ENCODE measurements at regions of chr16 and their contacts with region 1.

Region 1: DNA sequence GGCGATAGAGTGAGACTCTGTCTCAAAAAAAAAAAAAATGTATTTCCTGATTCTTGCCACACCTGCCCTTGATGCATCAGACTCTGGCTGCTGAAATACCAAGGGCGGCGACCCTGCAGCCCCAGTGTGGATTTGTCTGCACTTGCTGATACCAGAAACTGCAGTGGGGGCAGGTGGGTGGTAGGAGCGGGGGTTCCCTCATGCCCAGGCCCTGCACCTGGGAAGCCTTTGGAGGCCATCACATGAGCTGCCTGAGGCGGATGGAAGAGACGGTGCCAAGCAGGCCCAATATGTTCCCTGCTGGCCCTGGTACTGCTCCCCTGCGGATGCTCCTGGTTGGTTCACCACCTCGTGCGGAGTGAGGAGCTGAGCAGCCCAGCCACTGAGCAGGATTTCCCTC is 50.6 kb downstream of the MARF1 start:
- DNase-seq: peak; percentile 46
- H3K4me3 Mint-ChIP-seq: no peak overlapping the region
- H3K27ac Mint-ChIP-seq: no peak overlapping the region
- H3K4me1 Mint-ChIP-seq: peaks cover 50% of the 10 kb centered on the region
- H3K27me3 Mint-ChIP-seq: no peaks in the 10 kb centered on the region

Region 2: GRCh38 chr16:15477802-15478201 is 114.5 kb before region 1 on chr16:
- CTCF ChIA-PET with region 1: no interaction called
- intact Hi-C with region 1: loop called (anchors 5 kb)
- DNase-seq: no peak
- H3K4me3 Mint-ChIP-seq: no peak overlapping the region
- H3K27ac Mint-ChIP-seq: peak overlapping the region; percentile 60
- H3K4me1 Mint-ChIP-seq: peaks cover 26% of the 10 kb centered on the region
- H3K27me3 Mint-ChIP-seq: no peaks in the 10 kb centered on the region

Region 3: GRCh38 chr16:15553313-15554088 is 38.8 kb before region 1 on chr16:
- CTCF ChIA-PET with region 1: no interaction called
- intact Hi-C with region 1: loop called (anchors 1 kb)
- DNase-seq: peak; percentile 65
- H3K4me3 Mint-ChIP-seq: no peak overlapping the region
- H3K27ac Mint-ChIP-seq: peak overlapping the region; percentile 7
- H3K4me1 Mint-ChIP-seq: peaks cover 26% of the 10 kb centered on the region
- H3K27me3 Mint-ChIP-seq: no peaks in the 10 kb centered on the region

Region 4: GRCh38 chr16:15581127-15581815 is 11.1 kb before region 1 on chr16:
- CTCF ChIA-PET with region 1: no interaction called
- intact Hi-C with region 1: no loop called
- DNase-seq: no peak
- H3K4me3 Mint-ChIP-seq: no peak overlapping the region
- H3K27ac Mint-ChIP-seq: no peak overlapping the region
- H3K4me1 Mint-ChIP-seq: peaks cover 5% of the 10 kb centered on the region
- H3K27me3 Mint-ChIP-seq: no peaks in the 10 kb centered on the region

Region 5: DNA sequence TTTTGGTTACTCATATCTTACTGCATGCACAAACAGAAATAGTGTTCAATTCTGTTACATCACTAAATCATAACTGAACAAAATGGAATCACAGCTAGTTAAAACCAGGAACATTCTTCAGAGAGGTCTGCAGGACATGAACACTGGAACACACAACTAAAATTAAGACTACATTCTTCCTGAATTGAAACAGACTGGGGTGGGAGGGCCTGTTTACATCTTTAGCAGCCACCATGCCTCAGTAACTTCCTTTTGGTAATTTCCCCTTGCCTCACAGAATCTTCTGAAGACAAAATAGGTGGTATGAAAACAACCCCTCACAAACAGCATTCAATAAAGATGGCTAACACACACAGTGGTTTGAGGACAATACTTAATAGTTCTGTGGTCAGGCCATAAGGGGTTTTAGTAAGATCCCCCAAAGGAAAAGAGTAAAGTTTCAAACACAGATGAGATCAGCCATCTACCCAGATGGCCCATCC is 44.1 kb after region 1 on chr16:
- CTCF ChIA-PET with region 1: interaction called, 6 read pairs
- intact Hi-C with region 1: loop called (anchors 1 kb)
- DNase-seq: peak; percentile 27
- H3K4me3 Mint-ChIP-seq: no peak overlapping the region
- H3K27ac Mint-ChIP-seq: peak overlapping the region; percentile 88
- H3K4me1 Mint-ChIP-seq: peaks cover 77% of the 10 kb centered on the region
- H3K27me3 Mint-ChIP-seq: no peaks in the 10 kb centered on the region

Region 6: DNA sequence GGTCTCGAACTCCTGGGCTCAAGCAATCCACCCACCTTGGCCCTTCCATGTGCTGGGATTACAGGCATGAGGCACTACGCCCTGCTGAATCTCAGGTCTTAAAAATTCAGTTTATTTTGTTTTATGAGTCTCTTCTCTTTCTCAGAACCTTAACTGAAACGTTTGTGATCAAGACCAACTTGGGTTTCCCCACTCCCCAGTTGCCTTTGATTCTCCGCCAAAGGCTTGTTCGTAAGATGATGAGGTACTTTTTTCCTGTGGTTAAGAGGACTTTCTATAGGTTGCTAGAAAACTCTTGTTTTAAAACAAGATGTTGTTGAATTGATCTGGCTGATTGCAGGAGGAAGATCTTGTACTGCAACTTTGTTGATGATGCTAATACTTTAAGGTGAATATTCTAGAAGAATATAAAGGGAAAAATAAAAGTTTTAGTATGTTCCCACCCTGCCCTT is 368.8 kb after region 1 on chr16:
- CTCF ChIA-PET with region 1: no interaction called
- intact Hi-C with region 1: loop called (anchors 2 kb)
- DNase-seq: peak; percentile 93
- H3K4me3 Mint-ChIP-seq: peak overlapping the region; percentile 81
- H3K27ac Mint-ChIP-seq: peak overlapping the region; percentile 99
- H3K4me1 Mint-ChIP-seq: peaks cover 81% of the 10 kb centered on the region
- H3K27me3 Mint-ChIP-seq: no peaks in the 10 kb centered on the region

Measured in activated naive CD4-positive, alpha-beta T cell treated with anti-CD3 and anti-CD28 coated beads for 36 hours (primary cell).